ENCODE measurements at regions of chr5 and their contacts with region 1.

Region 1: GRCh38 chr5:59039296-59040023 is 456.6 kb downstream of the RAB3C start:
- DNase-seq: peak; percentile 75
- H3K4me3 ChIP-seq: peak overlapping the region; percentile 67
- H3K27ac ChIP-seq: peak overlapping the region; percentile 79
- H3K4me1 ChIP-seq: no peaks in the 10 kb centered on the region
- H3K27me3 ChIP-seq: no peaks in the 10 kb centered on the region
- CTCF ChIP-seq: no peak

Region 2: GRCh38 chr5:59143926-59144333 is 104.5 kb after region 1 on chr5:
- intact Hi-C with region 1: no loop called
- DNase-seq: no peak
- H3K4me3 ChIP-seq: no peak overlapping the region
- H3K27ac ChIP-seq: no peak overlapping the region
- H3K4me1 ChIP-seq: no peaks in the 10 kb centered on the region
- H3K27me3 ChIP-seq: no peaks in the 10 kb centered on the region
- CTCF ChIP-seq: no peak

Region 3: GRCh38 chr5:59174248-59174844 is 134.9 kb after region 1 on chr5:
- intact Hi-C with region 1: loop called (anchors 10 kb)
- DNase-seq: no peak
- H3K4me3 ChIP-seq: no peak overlapping the region
- H3K27ac ChIP-seq: no peak overlapping the region
- H3K4me1 ChIP-seq: no peaks in the 10 kb centered on the region
- H3K27me3 ChIP-seq: no peaks in the 10 kb centered on the region
- CTCF ChIP-seq: peak; percentile 78

Region 4: DNA sequence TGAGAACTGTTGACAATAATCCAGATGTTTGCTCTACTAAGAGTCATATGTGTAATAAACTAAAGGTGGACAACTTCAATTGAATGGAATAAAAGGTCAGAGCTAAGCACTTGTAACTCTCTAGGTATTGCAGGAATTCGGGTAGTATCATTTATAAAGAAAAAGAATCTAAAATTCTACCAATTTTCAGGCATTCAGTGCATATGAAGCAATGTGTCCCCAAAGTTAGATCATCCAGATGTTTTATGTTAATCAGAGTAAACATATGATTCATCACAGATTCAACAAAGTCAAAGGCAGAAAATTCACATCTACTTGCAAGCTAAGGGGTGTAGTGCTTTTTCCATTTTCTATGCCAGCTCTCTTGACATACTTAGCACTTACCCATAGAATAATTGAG is 377.0 kb after region 1 on chr5:
- intact Hi-C with region 1: no loop called
- DNase-seq: no peak
- H3K4me3 ChIP-seq: no peak overlapping the region
- H3K27ac ChIP-seq: no peak overlapping the region
- H3K4me1 ChIP-seq: peaks cover 5% of the 10 kb centered on the region
- H3K27me3 ChIP-seq: no peaks in the 10 kb centered on the region
- CTCF ChIP-seq: no peak

Measured in colonic mucosa (tissue), 4 donors.